ENCODE measurements at regions of chr1 and their contacts with region 1.

Region 1: DNA sequence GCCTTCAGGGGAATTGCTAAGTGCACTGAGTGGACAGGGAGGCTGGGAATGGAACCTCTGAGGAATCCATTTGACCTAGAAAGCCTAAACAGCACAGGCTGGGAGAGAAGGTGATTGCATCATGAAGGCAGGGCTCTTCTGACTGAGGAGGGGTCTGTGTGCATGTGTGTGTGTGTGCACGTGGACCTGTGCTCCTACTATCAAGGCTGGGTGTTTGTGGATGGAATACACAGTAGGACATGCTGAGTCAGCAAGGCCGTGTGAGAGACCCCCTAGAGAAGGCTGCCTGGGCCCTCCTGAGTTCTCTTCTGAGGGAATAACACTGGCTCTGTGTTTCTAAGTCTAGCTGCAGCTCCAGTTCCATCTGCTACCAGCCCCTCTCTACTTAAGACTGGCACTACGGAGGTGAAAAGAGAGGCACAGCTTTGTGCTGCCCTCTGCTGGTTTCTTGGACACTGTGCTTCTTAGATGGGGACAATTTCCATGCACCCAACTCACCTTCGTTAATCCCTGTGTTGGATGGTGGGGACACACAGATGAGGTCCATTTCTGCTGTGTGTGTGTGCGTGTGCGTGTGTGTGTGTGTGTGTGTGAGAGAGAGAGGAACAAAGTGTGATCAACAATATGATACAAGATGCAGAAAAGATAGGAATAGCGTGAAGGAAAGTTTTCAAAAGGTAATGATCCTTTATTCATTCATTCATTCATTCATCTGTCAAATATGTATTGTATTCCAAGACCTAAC is 6.2 kb upstream of the EFCAB14 start:
- DNase-seq: peak in 3 of 4 donors; percentile 54 to 85 (median 56)
- ATAC-seq: peak; percentile 99
- H3K4me3 ChIP-seq: no peak overlapping the region
- H3K27ac ChIP-seq: no peak overlapping the region
- H3K4me1 ChIP-seq: peaks cover 0 to 9% of the 10 kb centered on the region in 2 donors
- H3K27me3 ChIP-seq: peaks cover 0 to 31% of the 10 kb centered on the region in 2 donors
- CTCF ChIP-seq: peak; percentile 72 to 75

Region 2: DNA sequence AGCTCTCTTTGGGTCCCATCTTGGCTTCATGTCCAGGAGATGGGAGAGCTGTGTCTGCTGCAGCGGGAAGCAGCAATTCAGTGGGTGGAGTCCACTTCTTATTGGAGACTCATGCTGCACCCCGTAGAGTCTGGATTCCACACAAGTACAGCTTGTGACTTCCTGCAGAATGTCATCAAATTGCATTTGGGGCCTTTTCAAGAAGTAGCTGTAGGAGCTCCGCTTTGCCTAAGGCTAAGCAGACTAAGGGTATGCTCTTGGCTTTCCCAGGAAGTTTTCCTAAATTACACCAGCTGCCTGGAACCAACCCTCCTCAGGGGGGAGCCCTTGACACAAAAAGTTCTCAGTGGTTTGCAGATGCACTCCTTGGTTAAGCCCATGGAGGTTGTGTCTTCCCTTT is 102.8 kb before region 1 on chr1:
- intact Hi-C with region 1: loop called in 1 of 2 experiments (anchors 10 kb)
- DNase-seq: no peak
- ATAC-seq: peak; percentile 76
- H3K4me3 ChIP-seq: no peak overlapping the region
- H3K27ac ChIP-seq: no peak overlapping the region
- H3K4me1 ChIP-seq: peaks cover 0 to 2% of the 10 kb centered on the region in 2 donors
- H3K27me3 ChIP-seq: no peaks in the 10 kb centered on the region
- CTCF ChIP-seq: peak; percentile 19 to 31

Measured in left lung (tissue), 14 donors.